ENCODE measurements at regions of chr19 and their contacts with region 1.

Region 1: GRCh38 chr19:2887391-2887914 is 13.3 kb upstream of the ZNF57 start:
- DNase-seq: peak in 1 of 2 experiments; percentile 60
- H3K4me3 ChIP-seq: peak overlapping the region; percentile 10; the same call in 1 of the 2 replicates
- H3K4me3 Mint-ChIP-seq: peak overlapping the region; percentile 66
- H3K27ac Mint-ChIP-seq: peak overlapping the region; percentile 59
- H3K4me1 ChIP-seq: 0 out of 2 replicates have a peak, but pooled peaks cover 5% of the 10 kb centered on the region
- H3K4me1 Mint-ChIP-seq: peaks cover 11% of the 10 kb centered on the region
- H3K27me3 ChIP-seq: no peaks in the 10 kb centered on the region
- H3K27me3 Mint-ChIP-seq: no peaks in the 10 kb centered on the region
- CTCF ChIP-seq: peak; percentile 58 to 65

Region 2: GRCh38 chr19:2648528-2648937 is 238.9 kb before region 1 on chr19:
- CTCF ChIA-PET with region 1: interaction called, 10 read pairs
- POLR2A ChIA-PET with region 1: interaction called, 4 read pairs
- intact Hi-C with region 1: no loop called
- DNase-seq: peak; percentile 72 to 83
- H3K4me3 ChIP-seq: no peak overlapping the region
- H3K4me3 Mint-ChIP-seq: no peak overlapping the region
- H3K27ac Mint-ChIP-seq: no peak overlapping the region
- H3K4me1 ChIP-seq: no peaks in the 10 kb centered on the region
- H3K4me1 Mint-ChIP-seq: no peaks in the 10 kb centered on the region
- H3K27me3 ChIP-seq: no peaks in the 10 kb centered on the region
- H3K27me3 Mint-ChIP-seq: peaks cover 12% of the 10 kb centered on the region
- CTCF ChIP-seq: peak; percentile 66 to 83

Region 3: GRCh38 chr19:2840794-2841790 is 46.4 kb before region 1 on chr19 and contains the start of gene ZNF555:
- CTCF ChIA-PET with region 1: interaction called, 10 read pairs
- POLR2A ChIA-PET with region 1: no interaction called
- intact Hi-C with region 1: no loop called
- DNase-seq: peak; percentile 98 to 99
- H3K4me3 ChIP-seq: peak within 1 kb of the TSS; percentile 90
- H3K4me3 Mint-ChIP-seq: peak within 1 kb of the TSS; percentile 85
- H3K27ac Mint-ChIP-seq: peak within 1 kb of the TSS; percentile 93
- H3K4me1 ChIP-seq: no peaks in the 10 kb centered on the region
- H3K4me1 Mint-ChIP-seq: peaks cover 6% of the 10 kb centered on the region
- H3K27me3 ChIP-seq: no peaks in the 10 kb centered on the region
- H3K27me3 Mint-ChIP-seq: no peaks in the 10 kb centered on the region
- CTCF ChIP-seq: peak; percentile 56 to 61
- total RNA-seq, gene ZNF555: 4.7 and 6.2 TPM in 2 replicates

Region 4: DNA sequence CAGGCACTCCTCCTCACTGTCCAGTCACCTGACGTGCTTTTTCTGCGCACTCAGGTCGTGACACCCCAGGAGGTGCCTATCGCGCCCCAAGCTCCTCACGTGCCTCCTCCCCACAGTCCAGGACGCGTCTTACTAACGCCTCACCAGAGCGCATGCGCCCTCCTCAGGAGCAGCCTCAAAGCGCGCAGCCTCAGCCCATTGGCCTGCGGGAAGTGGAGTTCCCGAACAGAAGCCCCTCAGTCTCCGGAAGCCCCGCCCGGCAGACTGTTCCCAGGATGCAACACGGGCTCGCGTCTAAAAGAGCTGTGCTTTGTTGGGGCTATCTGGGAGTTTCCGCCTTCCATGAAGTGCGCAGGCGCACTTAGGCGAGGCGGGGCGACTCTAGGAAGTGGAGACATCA is 28.6 kb before region 1 on chr19:
- CTCF ChIA-PET with region 1: no interaction called
- POLR2A ChIA-PET with region 1: no interaction called
- intact Hi-C with region 1: no loop called
- DNase-seq: no peak
- H3K4me3 ChIP-seq: no peak overlapping the region
- H3K4me3 Mint-ChIP-seq: no peak overlapping the region
- H3K27ac Mint-ChIP-seq: no peak overlapping the region
- H3K4me1 ChIP-seq: no peaks in the 10 kb centered on the region
- H3K4me1 Mint-ChIP-seq: no peaks in the 10 kb centered on the region
- H3K27me3 ChIP-seq: no peaks in the 10 kb centered on the region
- H3K27me3 Mint-ChIP-seq: no peaks in the 10 kb centered on the region
- CTCF ChIP-seq: no peak

Region 5: DNA sequence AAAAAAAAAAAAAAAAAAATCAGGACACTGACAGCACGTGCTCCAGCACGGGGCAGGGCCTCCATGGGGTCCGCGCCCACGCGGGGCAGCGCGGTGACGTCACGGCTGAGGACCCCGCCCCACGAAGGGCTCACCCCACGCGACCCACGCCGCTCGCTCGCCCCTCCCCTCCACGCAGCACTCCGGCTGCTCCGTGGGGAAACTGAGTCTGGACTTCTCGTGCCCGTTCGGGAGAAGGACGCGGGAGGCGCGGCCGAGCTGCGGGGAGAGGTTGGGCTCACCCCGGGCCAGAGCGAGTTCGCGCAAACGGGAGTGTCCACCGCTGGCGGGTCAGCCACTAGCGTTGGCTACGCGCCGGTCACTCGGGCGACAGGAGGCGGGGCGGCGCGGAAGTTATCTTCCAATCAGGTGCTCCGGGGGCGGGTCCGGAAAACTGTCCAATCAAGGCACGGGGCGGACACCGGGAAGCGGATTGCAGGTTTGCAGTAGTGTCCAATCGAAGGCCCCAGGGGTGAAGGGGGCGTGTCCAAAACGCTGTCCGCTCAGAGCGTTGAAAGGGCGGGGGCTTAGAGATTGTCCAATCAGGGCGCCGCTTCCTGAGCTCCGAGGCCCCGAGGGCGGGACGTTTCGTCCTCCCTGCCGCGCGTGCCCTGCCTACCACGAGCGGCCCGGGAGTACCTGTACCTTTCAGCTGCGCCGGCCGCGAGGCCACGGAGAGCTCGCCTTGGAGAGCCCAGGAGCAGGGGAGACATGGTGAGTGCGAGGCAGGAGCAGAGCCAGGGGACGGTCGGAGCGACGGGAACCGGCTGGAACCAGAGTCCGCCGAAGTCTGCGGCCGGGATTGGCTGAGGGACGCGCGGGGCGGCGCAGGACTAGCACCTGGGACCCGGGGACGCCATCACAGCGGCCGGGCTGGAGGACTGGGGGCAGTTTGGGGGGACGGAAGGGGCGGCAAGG is 13.1 kb after region 1 on chr19 and contains the start of gene ZNF57:
- CTCF ChIA-PET with region 1: interaction called, 18 read pairs
- POLR2A ChIA-PET with region 1: interaction called, 8 read pairs
- intact Hi-C with region 1: no loop called
- DNase-seq: peak; percentile 99
- H3K4me3 ChIP-seq: peak within 1 kb of the TSS; percentile 99
- H3K4me3 Mint-ChIP-seq: peak within 1 kb of the TSS; percentile 98
- H3K27ac Mint-ChIP-seq: peak within 1 kb of the TSS; percentile 96
- H3K4me1 ChIP-seq: peaks cover 4% of the 10 kb centered on the region; the same call in 1 of the 2 replicates
- H3K4me1 Mint-ChIP-seq: no peaks in the 10 kb centered on the region
- H3K27me3 ChIP-seq: no peaks in the 10 kb centered on the region
- H3K27me3 Mint-ChIP-seq: no peaks in the 10 kb centered on the region
- CTCF ChIP-seq: no peak
- total RNA-seq, gene ZNF57: 5.8 and 7.6 TPM in 2 replicates

Region 6: GRCh38 chr19:2944775-2945574 is 57.5 kb after region 1 on chr19 and contains the start of gene ZNF77:
- CTCF ChIA-PET with region 1: interaction called, 23 read pairs
- POLR2A ChIA-PET with region 1: interaction called, 20 read pairs
- intact Hi-C with region 1: loop called (anchors 1 kb)
- DNase-seq: peak; percentile 98 to 99
- H3K4me3 ChIP-seq: peak within 1 kb of the TSS; percentile 94
- H3K4me3 Mint-ChIP-seq: peak within 1 kb of the TSS; percentile 92
- H3K27ac Mint-ChIP-seq: peak within 1 kb of the TSS; percentile 95
- H3K4me1 ChIP-seq: 0 out of 2 replicates have a peak, but pooled peaks cover 3% of the 10 kb centered on the region
- H3K4me1 Mint-ChIP-seq: peaks cover 21% of the 10 kb centered on the region
- H3K27me3 ChIP-seq: no peaks in the 10 kb centered on the region
- H3K27me3 Mint-ChIP-seq: no peaks in the 10 kb centered on the region
- CTCF ChIP-seq: no peak
- total RNA-seq, gene ZNF77: 6.3 and 6.6 TPM in 2 replicates

Region 7: GRCh38 chr19:2950286-2951124 is 63.1 kb after region 1 on chr19:
- CTCF ChIA-PET with region 1: interaction called, 23 read pairs
- POLR2A ChIA-PET with region 1: interaction called, 20 read pairs
- intact Hi-C with region 1: no loop called
- DNase-seq: peak; percentile 99
- H3K4me3 ChIP-seq: peak overlapping the region; percentile 68
- H3K4me3 Mint-ChIP-seq: peak overlapping the region; percentile 97
- H3K27ac Mint-ChIP-seq: peak overlapping the region; percentile 97
- H3K4me1 ChIP-seq: peaks cover 14% of the 10 kb centered on the region
- H3K4me1 Mint-ChIP-seq: peaks cover 16% of the 10 kb centered on the region
- H3K27me3 ChIP-seq: no peaks in the 10 kb centered on the region
- H3K27me3 Mint-ChIP-seq: no peaks in the 10 kb centered on the region
- CTCF ChIP-seq: no peak

Region 8: GRCh38 chr19:2977001-2977685 is 89.7 kb after region 1 on chr19 and contains the start of gene TLE6:
- CTCF ChIA-PET with region 1: interaction called, 3 read pairs
- POLR2A ChIA-PET with region 1: interaction called, 10 read pairs
- intact Hi-C with region 1: no loop called
- DNase-seq: peak; percentile 97
- H3K4me3 ChIP-seq: peak within 1 kb of the TSS; percentile 52
- H3K4me3 Mint-ChIP-seq: peak within 1 kb of the TSS; percentile 85
- H3K27ac Mint-ChIP-seq: peak within 1 kb of the TSS; percentile 72
- H3K4me1 ChIP-seq: peaks cover 16% of the 10 kb centered on the region; the same call in 1 of the 2 replicates
- H3K4me1 Mint-ChIP-seq: no peaks in the 10 kb centered on the region
- H3K27me3 ChIP-seq: no peaks in the 10 kb centered on the region
- H3K27me3 Mint-ChIP-seq: no peaks in the 10 kb centered on the region
- CTCF ChIP-seq: no peak
- total RNA-seq, gene TLE6: 1.4 and 1.9 TPM in 2 replicates